PC-3 (cell line): ENCODE measurements at regions of chr12 and their contacts with region 1.

Region 1: GRCh38 chr12:38253778-38254177 is 62.8 kb upstream of the ALG10B start:
- DNase-seq: no peak
- ATAC-seq: no peak
- H3K4me3 ChIP-seq: no peak overlapping the region
- H3K27ac ChIP-seq: no peak overlapping the region
- H3K4me1 ChIP-seq: no peaks in the 10 kb centered on the region
- H3K27me3 ChIP-seq: no peaks in the 10 kb centered on the region
- CTCF ChIP-seq: no peak

Region 2: GRCh38 chr12:38282886-38283285 is 29.1 kb after region 1 on chr12:
- CTCF ChIA-PET with region 1: no interaction called
- POLR2A ChIA-PET with region 1: no interaction called
- intact Hi-C with region 1: loop called (anchors 5 kb)
- DNase-seq: peak; percentile 98
- ATAC-seq: peak; percentile 99
- H3K4me3 ChIP-seq: peak overlapping the region; percentile 11; the same call in 1 of the 2 replicates
- H3K27ac ChIP-seq: peak overlapping the region; percentile 91
- H3K4me1 ChIP-seq: peaks cover 25% of the 10 kb centered on the region
- H3K27me3 ChIP-seq: no peaks in the 10 kb centered on the region
- CTCF ChIP-seq: no peak